MCF 10A (cell line): ENCODE measurements at regions of chr2 and their contacts with region 1.

Region 1: DNA sequence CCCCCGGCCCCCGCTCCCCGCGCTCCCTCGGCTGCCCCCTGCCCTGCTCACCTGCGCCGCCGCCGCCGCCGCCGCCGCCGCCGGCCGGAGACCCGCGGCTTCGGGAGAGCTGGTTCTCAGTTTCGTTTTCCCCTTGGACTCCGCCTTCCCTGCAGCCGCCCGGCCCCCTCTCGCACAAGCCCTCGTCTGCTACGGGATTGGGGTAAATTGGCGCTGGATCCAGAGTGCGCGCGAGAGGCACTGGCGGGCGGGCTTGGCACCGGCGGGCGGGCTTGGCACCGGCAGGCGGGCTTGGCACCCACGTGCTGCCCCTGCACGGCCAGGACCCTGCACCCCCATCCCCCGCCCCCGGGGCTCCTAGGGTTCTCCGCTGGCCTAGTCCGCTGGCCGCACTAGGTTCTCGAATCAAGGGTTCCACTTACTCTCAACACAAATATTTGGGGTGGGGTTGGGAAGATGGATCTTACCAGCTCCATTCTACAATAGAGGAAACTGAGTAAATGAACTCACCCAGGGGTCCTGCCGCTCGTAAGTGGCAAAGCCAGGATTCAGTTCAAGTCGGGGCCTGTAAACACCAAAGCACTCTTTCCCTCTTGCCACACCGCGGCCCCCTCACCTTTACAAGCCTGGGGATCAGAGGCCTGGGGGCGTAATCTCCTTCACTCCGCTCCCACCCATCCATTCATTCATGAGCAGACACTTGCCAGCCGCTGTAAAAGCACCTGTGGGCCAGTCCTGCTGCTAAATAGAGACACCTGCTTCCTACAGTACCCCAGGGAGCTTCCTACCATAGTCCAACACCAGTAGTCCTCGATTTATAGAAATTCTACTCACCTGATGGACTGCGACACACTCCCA is at the start of gene EIF2AK2:
- DNase-seq: peak; percentile 90
- H3K4me3 Mint-ChIP-seq: peak within 1 kb of the TSS; percentile 84
- H3K27ac Mint-ChIP-seq: peak within 1 kb of the TSS; percentile 90
- H3K4me1 Mint-ChIP-seq: peaks cover 28% of the 10 kb centered on the region
- H3K27me3 Mint-ChIP-seq: no peaks in the 10 kb centered on the region
- CTCF ChIP-seq: no peak
- total RNA-seq, gene EIF2AK2: 29.6 and 39.3 TPM in 2 replicates

Region 2: GRCh38 chr2:37083873-37084794 is 73.0 kb before region 1 on chr2 and contains the starts of genes GPATCH11 and HEATR5B:
- CTCF ChIA-PET with region 1: no interaction called
- POLR2A ChIA-PET with region 1: interaction called, 17 read pairs
- intact Hi-C with region 1: no loop called
- DNase-seq: peak; percentile 97
- H3K4me3 Mint-ChIP-seq: no peak within 1 kb of the TSS
- H3K27ac Mint-ChIP-seq: no peak within 1 kb of the TSS
- H3K4me1 Mint-ChIP-seq: peaks cover 30% of the 10 kb centered on the region
- H3K27me3 Mint-ChIP-seq: no peaks in the 10 kb centered on the region
- CTCF ChIP-seq: no peak
- total RNA-seq, gene GPATCH11: 5.5 and 5.9 TPM in 2 replicates
- total RNA-seq, gene HEATR5B: 14.5 and 14.8 TPM in 2 replicates

Region 3: GRCh38 chr2:37168217-37168981 is 11.3 kb after region 1 on chr2:
- CTCF ChIA-PET with region 1: interaction called, 11 read pairs
- POLR2A ChIA-PET with region 1: interaction called, 6 read pairs
- intact Hi-C with region 1: no loop called
- DNase-seq: peak; percentile 59
- H3K4me3 Mint-ChIP-seq: no peak overlapping the region
- H3K27ac Mint-ChIP-seq: no peak overlapping the region
- H3K4me1 Mint-ChIP-seq: no peaks in the 10 kb centered on the region
- H3K27me3 Mint-ChIP-seq: no peaks in the 10 kb centered on the region
- CTCF ChIP-seq: peak; percentile 65

Region 4: GRCh38 chr2:37189452-37190153 is 32.5 kb after region 1 on chr2:
- CTCF ChIA-PET with region 1: no interaction called
- POLR2A ChIA-PET with region 1: interaction called, 13 read pairs
- intact Hi-C with region 1: no loop called
- DNase-seq: peak; percentile 95
- H3K4me3 Mint-ChIP-seq: no peak overlapping the region
- H3K27ac Mint-ChIP-seq: peak overlapping the region; percentile 68
- H3K4me1 Mint-ChIP-seq: peaks cover 14% of the 10 kb centered on the region
- H3K27me3 Mint-ChIP-seq: no peaks in the 10 kb centered on the region
- CTCF ChIP-seq: no peak

Region 5: DNA sequence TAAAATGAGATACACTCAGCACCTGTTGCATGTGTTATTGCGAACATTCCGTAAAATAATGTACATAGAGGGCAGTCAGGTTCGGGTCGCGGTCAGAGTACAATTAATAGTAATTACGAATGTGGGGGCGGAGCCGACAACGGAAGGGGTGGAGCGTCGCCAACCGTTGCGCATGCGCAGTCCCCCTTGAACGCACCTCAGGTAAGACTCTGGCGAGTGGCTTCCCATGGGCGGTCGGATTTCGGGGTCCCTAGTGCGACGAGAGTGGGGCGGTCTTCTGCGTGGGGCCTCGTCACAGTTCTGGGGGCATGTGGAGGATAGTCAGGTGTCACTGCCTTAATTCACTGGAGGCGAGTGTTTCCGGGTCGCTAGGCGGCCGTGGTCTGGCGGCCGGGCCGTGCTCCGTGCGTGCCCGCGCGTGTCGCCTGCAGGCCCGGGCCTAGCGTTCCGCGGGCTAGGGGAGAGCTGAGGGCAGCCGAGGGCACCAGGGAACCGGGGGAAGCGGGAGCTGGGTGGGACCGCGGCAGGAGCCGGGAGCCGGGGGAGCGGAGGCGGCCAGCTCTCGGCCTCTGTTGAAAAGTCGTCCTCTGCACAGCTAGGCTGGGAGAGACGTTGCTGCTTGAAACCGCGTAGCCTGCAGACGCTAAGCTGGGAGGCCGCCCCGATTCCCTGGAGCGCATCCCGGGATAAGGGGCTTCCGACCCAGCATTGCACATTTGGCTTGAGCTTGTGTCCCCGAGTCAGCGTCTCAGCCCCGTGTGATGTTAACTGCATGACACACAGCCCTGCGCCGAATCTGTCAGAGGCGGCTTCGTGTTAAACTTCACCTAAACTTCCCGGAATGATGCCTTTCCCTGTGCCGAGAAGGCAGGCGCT is 39.5 kb after region 1 on chr2 and contains the start of gene CEBPZOS:
- CTCF ChIA-PET with region 1: interaction called, 3 read pairs
- POLR2A ChIA-PET with region 1: interaction called, 10 read pairs
- intact Hi-C with region 1: no loop called
- DNase-seq: peak; percentile 84
- H3K4me3 Mint-ChIP-seq: peak within 1 kb of the TSS; percentile 85
- H3K27ac Mint-ChIP-seq: peak within 1 kb of the TSS; percentile 87
- H3K4me1 Mint-ChIP-seq: peaks cover 6% of the 10 kb centered on the region
- H3K27me3 Mint-ChIP-seq: no peaks in the 10 kb centered on the region
- CTCF ChIP-seq: no peak
- total RNA-seq, gene CEBPZOS: 38.5 and 64.5 TPM in 2 replicates